ENCODE measurements at regions of chr7 and their contacts with region 1.

Region 1: GRCh38 chr7:154744256-154744860 is 258.6 kb downstream of the PAXIP1 start:
- DNase-seq: peak; percentile 86
- H3K4me3 ChIP-seq: no peak overlapping the region; a peak in 1 of 4 replicates
- H3K27ac ChIP-seq: peak overlapping the region in 1 of 2 experiments; percentile 75; a peak in 1 of 4 replicates
- H3K4me1 ChIP-seq: peaks cover 0 to 40% of the 10 kb centered on the region in 2 experiments; a peak in 2 of 4 replicates
- H3K27me3 ChIP-seq: no peaks in the 10 kb centered on the region
- CTCF ChIP-seq: peak; percentile 61
- EP300 ChIP-seq: no peak
- RAD21 ChIP-seq: peak; percentile 73

Region 2: DNA sequence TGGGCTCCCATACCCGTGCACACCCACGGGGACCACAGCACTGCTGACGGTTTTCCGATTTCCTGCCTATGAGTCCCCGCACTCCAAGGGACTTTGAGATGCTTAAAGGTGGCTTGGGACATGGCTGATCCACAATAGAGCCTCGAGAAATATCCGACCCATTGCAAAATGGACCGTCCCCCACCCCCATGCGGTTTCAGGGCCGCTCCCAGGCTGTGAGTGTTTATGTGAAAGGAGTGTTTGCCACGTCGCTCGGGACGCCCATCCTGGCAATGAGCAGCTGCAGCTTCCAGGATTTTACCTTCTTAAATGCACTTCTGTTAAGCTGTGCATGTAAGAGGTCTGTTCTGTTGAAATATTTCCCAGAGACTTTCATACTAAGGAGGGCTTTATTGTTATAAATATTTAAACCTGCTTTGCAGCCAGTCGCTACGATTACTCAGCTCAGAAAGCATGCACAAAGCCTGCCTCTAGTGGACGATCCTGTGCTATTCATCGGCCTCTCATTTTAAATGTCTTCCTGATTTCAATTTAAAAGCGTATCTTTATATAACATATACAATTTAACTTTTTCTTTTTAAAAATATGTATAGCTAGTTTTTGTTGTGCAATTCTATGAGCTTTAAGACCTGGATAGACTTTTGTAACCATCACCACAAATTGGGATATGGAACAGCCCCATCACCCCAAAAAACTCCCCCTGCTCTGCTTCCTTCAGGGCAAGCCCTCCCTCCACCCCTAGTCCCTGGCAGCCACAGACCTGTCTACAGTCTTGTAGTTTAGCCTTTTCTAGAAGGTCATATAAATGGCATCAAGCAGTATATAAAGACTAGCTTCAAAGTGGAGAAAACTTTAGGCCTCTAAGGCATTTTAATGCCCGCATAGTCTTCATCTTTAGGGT is 159.8 kb before region 1 on chr7:
- CTCF ChIA-PET with region 1: interaction called, 21 read pairs
- POLR2A ChIA-PET with region 1: no interaction called
- DNase-seq: peak; percentile 56
- H3K4me3 ChIP-seq: no peak overlapping the region
- H3K27ac ChIP-seq: no peak overlapping the region
- H3K4me1 ChIP-seq: peaks cover 0 to 5% of the 10 kb centered on the region in 2 experiments; a peak in 1 of 4 replicates
- H3K27me3 ChIP-seq: no peaks in the 10 kb centered on the region
- CTCF ChIP-seq: peak; percentile 16
- EP300 ChIP-seq: no peak
- RAD21 ChIP-seq: peak; percentile 55

Region 3: DNA sequence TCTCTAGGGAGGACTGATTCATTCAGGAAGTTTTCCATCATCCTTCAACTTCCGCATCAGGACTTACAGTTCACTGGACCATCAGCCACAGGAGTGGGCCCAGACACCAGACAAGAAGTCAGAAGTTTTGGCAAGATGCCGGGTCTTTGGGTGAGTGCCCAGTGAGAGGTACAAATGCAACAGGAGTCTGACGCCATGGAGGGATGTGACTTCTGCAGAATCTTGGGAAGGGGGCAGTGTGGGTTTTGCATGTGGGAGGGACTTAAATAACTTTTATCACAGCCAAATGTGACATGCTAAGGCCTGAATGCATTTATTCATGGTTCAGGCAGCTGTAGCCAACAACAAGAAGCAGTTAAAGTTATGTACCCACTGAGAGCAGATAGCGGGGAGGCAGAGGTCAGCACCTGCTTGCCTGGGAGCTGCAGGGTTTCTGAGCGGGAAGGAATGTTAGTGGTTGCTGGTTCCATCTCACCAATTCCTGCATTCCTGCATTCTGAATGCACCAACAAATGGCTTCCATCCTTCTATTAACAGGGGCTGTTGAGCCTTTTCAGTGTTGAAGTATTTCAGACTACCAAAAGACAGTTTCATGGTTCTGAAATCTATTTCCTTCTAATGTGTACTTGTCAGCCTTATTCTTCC is 116.6 kb before region 1 on chr7:
- CTCF ChIA-PET with region 1: interaction called, 10 read pairs
- POLR2A ChIA-PET with region 1: no interaction called
- DNase-seq: no peak
- H3K4me3 ChIP-seq: no peak overlapping the region
- H3K27ac ChIP-seq: no peak overlapping the region
- H3K4me1 ChIP-seq: peaks cover 0 to 5% of the 10 kb centered on the region in 2 experiments; a peak in 2 of 4 replicates
- H3K27me3 ChIP-seq: no peaks in the 10 kb centered on the region
- CTCF ChIP-seq: no peak
- EP300 ChIP-seq: no peak
- RAD21 ChIP-seq: no peak

Region 4: DNA sequence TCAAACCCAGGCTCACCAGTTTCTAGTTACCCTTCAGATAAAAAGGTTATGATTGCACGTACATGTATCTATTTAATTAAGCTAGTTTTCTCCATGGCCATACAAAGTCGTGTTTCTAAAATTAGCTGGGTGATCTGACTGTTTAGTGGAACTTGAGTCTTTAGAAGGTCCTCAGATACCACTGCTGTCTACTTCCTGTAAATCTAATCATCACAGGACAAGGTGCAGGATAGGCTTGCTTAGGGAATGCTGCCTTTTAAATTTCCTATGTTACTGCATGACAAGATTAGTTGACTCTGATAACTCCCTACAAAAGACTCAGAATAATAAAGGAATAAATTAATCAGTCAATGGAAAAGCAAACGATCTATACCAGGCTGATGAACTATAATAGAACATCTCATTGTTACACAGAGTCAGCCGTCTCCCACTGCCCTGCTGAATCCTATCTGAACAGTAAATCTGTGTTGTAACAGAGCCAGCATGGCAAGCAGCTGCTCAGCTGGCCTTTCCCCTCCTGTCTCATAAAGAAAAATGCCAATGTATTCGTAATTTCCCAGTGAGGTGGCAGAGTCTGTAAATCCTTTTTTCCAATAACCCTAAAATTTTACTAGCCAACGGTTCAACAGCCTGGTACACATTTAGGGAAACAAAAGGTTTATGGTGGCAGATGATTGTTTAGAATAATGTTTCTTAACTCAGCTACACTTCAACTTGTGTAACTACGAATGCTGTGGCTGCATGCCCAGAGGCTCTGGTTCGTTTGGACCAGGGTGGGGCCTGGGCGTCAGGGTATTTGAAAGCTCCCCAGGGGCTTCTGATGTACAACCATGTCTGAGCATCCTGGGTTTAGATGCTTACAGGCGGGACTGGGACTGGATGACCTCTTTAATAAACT is 59.4 kb before region 1 on chr7:
- CTCF ChIA-PET with region 1: interaction called, 14 read pairs
- POLR2A ChIA-PET with region 1: no interaction called
- DNase-seq: peak; percentile 75
- H3K4me3 ChIP-seq: no peak overlapping the region
- H3K27ac ChIP-seq: peak overlapping the region in 1 of 2 experiments; percentile 65; a peak in 2 of 4 replicates
- H3K4me1 ChIP-seq: peaks cover 0 to 33% of the 10 kb centered on the region in 2 experiments; a peak in 2 of 4 replicates
- H3K27me3 ChIP-seq: no peaks in the 10 kb centered on the region
- CTCF ChIP-seq: no peak
- EP300 ChIP-seq: peak in 1 of 2 experiments; percentile 51; a peak in 2 of 4 replicates
- RAD21 ChIP-seq: no peak

Region 5: DNA sequence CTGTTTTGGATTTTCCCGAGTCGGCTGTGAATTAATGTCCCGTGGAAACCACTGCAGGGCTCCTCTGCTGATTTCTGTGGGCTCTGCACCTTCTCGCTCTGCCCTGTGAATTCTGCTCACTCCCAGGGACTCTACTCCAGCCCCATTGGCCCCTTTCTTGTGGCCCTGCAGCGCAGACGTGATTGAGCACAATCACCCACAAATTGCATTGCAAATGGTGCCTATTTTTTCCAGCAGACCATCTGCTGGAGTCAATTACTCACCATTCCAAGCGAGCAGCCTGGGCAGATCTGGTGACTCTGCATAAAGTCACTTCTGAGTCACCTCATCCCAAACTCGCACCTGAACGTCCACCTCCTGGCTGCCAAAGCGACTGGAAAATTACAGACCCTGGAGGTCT is 22.8 kb after region 1 on chr7:
- CTCF ChIA-PET with region 1: interaction called, 19 read pairs
- POLR2A ChIA-PET with region 1: no interaction called
- DNase-seq: no peak
- H3K4me3 ChIP-seq: no peak overlapping the region
- H3K27ac ChIP-seq: no peak overlapping the region
- H3K4me1 ChIP-seq: peaks cover 0 to 14% of the 10 kb centered on the region in 2 experiments; a peak in 1 of 4 replicates
- H3K27me3 ChIP-seq: no peaks in the 10 kb centered on the region
- CTCF ChIP-seq: no peak
- EP300 ChIP-seq: no peak
- RAD21 ChIP-seq: no peak

Region 6: GRCh38 chr7:154862153-154862791 is 117.9 kb after region 1 on chr7:
- CTCF ChIA-PET with region 1: no interaction called
- POLR2A ChIA-PET with region 1: no interaction called
- DNase-seq: peak; percentile 30
- H3K4me3 ChIP-seq: no peak overlapping the region
- H3K27ac ChIP-seq: no peak overlapping the region
- H3K4me1 ChIP-seq: peaks cover 0 to 2% of the 10 kb centered on the region in 2 experiments; a peak in 1 of 4 replicates
- H3K27me3 ChIP-seq: no peaks in the 10 kb centered on the region
- CTCF ChIP-seq: no peak
- EP300 ChIP-seq: no peak
- RAD21 ChIP-seq: no peak